GM12878 (cell line): ENCODE measurements at regions of chr9 and their contacts with region 1.

Region 1: GRCh38 chr9:19174127-19174912 is 47.0 kb upstream of the PLIN2 start:
- DNase-seq: peak; percentile 64
- ATAC-seq: peak; percentile 99
- H3K4me3 ChIP-seq: no peak overlapping the region
- H3K27ac ChIP-seq: no peak overlapping the region
- H3K4me1 ChIP-seq: no peaks in the 10 kb centered on the region
- H3K27me3 ChIP-seq: no peaks in the 10 kb centered on the region
- CTCF ChIP-seq: peak; percentile 50 to 66 (median 51); a peak in 5 of 6 replicates
- EP300 ChIP-seq: no peak
- POLR2A ChIP-seq: no peak
- RAD21 ChIP-seq: peak; percentile 77

Region 2: GRCh38 chr9:19028835-19029451 is 145.4 kb before region 1 on chr9:
- CTCF ChIA-PET with region 1: interaction called, 11 read pairs
- POLR2A ChIA-PET with region 1: no interaction called
- RAD21 ChIA-PET with region 1: interaction called, 11 read pairs
- SMC1A ChIA-PET with region 1: interaction called, 10 read pairs
- in situ Hi-C with region 1: no loop called
- intact Hi-C with region 1: no loop called
- DNase-seq: no peak
- ATAC-seq: peak; percentile 87
- H3K4me3 ChIP-seq: no peak overlapping the region
- H3K27ac ChIP-seq: no peak overlapping the region
- H3K4me1 ChIP-seq: peaks cover 3% of the 10 kb centered on the region; the same call in 1 of the 2 replicates
- H3K27me3 ChIP-seq: no peaks in the 10 kb centered on the region
- CTCF ChIP-seq: peak; percentile 54 to 79 (median 71); a peak in 5 of 6 replicates
- EP300 ChIP-seq: no peak
- POLR2A ChIP-seq: no peak
- RAD21 ChIP-seq: peak; percentile 88

Region 3: GRCh38 chr9:19122490-19123042 is 51.8 kb before region 1 on chr9:
- CTCF ChIA-PET with region 1: interaction called, 17 read pairs
- POLR2A ChIA-PET with region 1: interaction called, 3 read pairs
- RAD21 ChIA-PET with region 1: interaction called, 9 read pairs
- SMC1A ChIA-PET with region 1: interaction called, 28 read pairs
- in situ Hi-C with region 1: no loop called
- intact Hi-C with region 1: no loop called
- DNase-seq: no peak
- ATAC-seq: no peak
- H3K4me3 ChIP-seq: no peak overlapping the region
- H3K27ac ChIP-seq: no peak overlapping the region
- H3K4me1 ChIP-seq: peaks cover 7% of the 10 kb centered on the region
- H3K27me3 ChIP-seq: no peaks in the 10 kb centered on the region
- CTCF ChIP-seq: no peak
- EP300 ChIP-seq: no peak
- POLR2A ChIP-seq: no peak
- RAD21 ChIP-seq: no peak

Region 4: DNA sequence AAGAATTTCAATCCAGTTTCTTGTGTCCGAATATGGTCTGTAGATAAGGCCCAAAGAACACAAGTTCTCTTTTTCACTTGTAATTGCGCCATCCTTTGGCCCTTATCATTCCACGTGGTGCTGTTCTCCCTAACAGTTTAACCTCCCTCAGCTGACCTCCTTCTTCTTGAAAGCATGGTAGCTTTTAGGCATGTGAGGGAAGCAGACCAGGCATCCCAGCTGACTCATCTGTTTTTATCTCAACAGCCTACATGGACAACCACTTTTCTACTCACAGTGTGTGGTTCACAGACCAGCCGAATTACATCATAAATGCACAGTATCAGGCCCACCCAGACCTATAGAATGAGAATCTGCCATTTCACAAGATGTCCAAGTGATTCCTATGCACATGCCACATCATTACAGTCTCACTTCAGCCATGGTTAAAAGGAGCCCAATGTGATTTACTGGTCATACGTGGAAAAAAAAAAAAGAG is 20.1 kb before region 1 on chr9:
- CTCF ChIA-PET with region 1: interaction called, 14 read pairs
- POLR2A ChIA-PET with region 1: interaction called, 13 read pairs
- RAD21 ChIA-PET with region 1: interaction called, 11 read pairs
- SMC1A ChIA-PET with region 1: interaction called, 12 read pairs
- in situ Hi-C with region 1: no loop called
- intact Hi-C with region 1: no loop called
- DNase-seq: no peak
- ATAC-seq: peak; percentile 21; the same call in 2 of the 3 replicates
- H3K4me3 ChIP-seq: no peak overlapping the region
- H3K27ac ChIP-seq: no peak overlapping the region
- H3K4me1 ChIP-seq: no peaks in the 10 kb centered on the region; the same call in 1 of the 2 replicates
- H3K27me3 ChIP-seq: no peaks in the 10 kb centered on the region
- CTCF ChIP-seq: no peak
- EP300 ChIP-seq: no peak
- POLR2A ChIP-seq: no peak
- RAD21 ChIP-seq: no peak

Region 5: GRCh38 chr9:19230356-19231125 is 56.2 kb after region 1 on chr9 and contains the start of gene DENND4C:
- CTCF ChIA-PET with region 1: interaction called, 15 read pairs
- POLR2A ChIA-PET with region 1: interaction called, 3 read pairs
- RAD21 ChIA-PET with region 1: interaction called, 7 read pairs
- SMC1A ChIA-PET with region 1: interaction called, 4 read pairs
- in situ Hi-C with region 1: no loop called
- intact Hi-C with region 1: no loop called
- DNase-seq: peak; percentile 66
- ATAC-seq: peak; percentile 90
- H3K4me3 ChIP-seq: peak within 1 kb of the TSS; percentile 79
- H3K27ac ChIP-seq: peak within 1 kb of the TSS; percentile 94
- H3K4me1 ChIP-seq: no peaks in the 10 kb centered on the region; the same call in 1 of the 2 replicates
- H3K27me3 ChIP-seq: no peaks in the 10 kb centered on the region
- CTCF ChIP-seq: peak in 1 of 3 experiments; percentile 24; a peak in 1 of 6 replicates
- EP300 ChIP-seq: peak; percentile 58 to 87
- POLR2A ChIP-seq: peak; percentile 92
- RAD21 ChIP-seq: no peak
- polyA plus RNA-seq, gene DENND4C: 8.2 to 10.1 TPM